Activated CD4-positive, alpha-beta memory T cell treated with anti-CD3 and anti-CD28 coated beads for 36 hours (primary cell): ENCODE measurements at regions of chr15 and their contacts with region 1.

Region 1: GRCh38 chr15:88891546-88892254 is 3.6 kb downstream of the HAPLN3 start:
- DNase-seq: no peak
- H3K4me3 Mint-ChIP-seq: no peak overlapping the region
- H3K27ac Mint-ChIP-seq: no peak overlapping the region
- H3K4me1 Mint-ChIP-seq: peaks cover 23% of the 10 kb centered on the region
- H3K27me3 Mint-ChIP-seq: no peaks in the 10 kb centered on the region

Region 2: GRCh38 chr15:88839146-88839545 is 52.6 kb before region 1 on chr15:
- CTCF ChIA-PET with region 1: no interaction called
- POLR2A ChIA-PET with region 1: no interaction called
- intact Hi-C with region 1: no loop called
- DNase-seq: no peak
- H3K4me3 Mint-ChIP-seq: no peak overlapping the region
- H3K27ac Mint-ChIP-seq: no peak overlapping the region
- H3K4me1 Mint-ChIP-seq: no peaks in the 10 kb centered on the region
- H3K27me3 Mint-ChIP-seq: peaks cover 2% of the 10 kb centered on the region

Region 3: GRCh38 chr15:88878720-88879184 is 12.9 kb before region 1 on chr15:
- CTCF ChIA-PET with region 1: interaction called, 10 read pairs
- POLR2A ChIA-PET with region 1: no interaction called
- intact Hi-C with region 1: no loop called
- DNase-seq: peak; percentile 58
- H3K4me3 Mint-ChIP-seq: no peak overlapping the region
- H3K27ac Mint-ChIP-seq: no peak overlapping the region
- H3K4me1 Mint-ChIP-seq: no peaks in the 10 kb centered on the region
- H3K27me3 Mint-ChIP-seq: no peaks in the 10 kb centered on the region

Region 4: GRCh38 chr15:89087830-89088604 is 196.3 kb after region 1 on chr15 and contains the start of gene ABHD2:
- CTCF ChIA-PET with region 1: no interaction called
- POLR2A ChIA-PET with region 1: no interaction called
- intact Hi-C with region 1: no loop called
- DNase-seq: peak; percentile 99
- H3K4me3 Mint-ChIP-seq: no peak within 1 kb of the TSS
- H3K27ac Mint-ChIP-seq: no peak within 1 kb of the TSS
- H3K4me1 Mint-ChIP-seq: peaks cover 36% of the 10 kb centered on the region
- H3K27me3 Mint-ChIP-seq: no peaks in the 10 kb centered on the region
- total RNA-seq, gene ABHD2: 36.0 to 38.5 TPM